Activated CD4-positive, alpha-beta T cell treated with anti-CD3 and anti-CD28 coated beads, Interleukin-2, amount 10 ng/mL, durations not matched to agents 24 days and 14 days (primary cell): ENCODE measurements at regions of chr18 and their contacts with region 1.

Region 1: GRCh38 chr18:10560450-10561045 is 34.7 kb downstream of the NAPG start:
- DNase-seq: peak; percentile 89
- H3K4me3 Mint-ChIP-seq: peak overlapping the region; percentile 3
- H3K27ac Mint-ChIP-seq: no peak overlapping the region
- H3K4me1 Mint-ChIP-seq: peaks cover 11% of the 10 kb centered on the region
- H3K27me3 Mint-ChIP-seq: no peaks in the 10 kb centered on the region

Region 2: GRCh38 chr18:11553098-11553940 is 992.8 kb after region 1 on chr18:
- intact Hi-C with region 1: loop called (anchors 5 kb)
- DNase-seq: peak; percentile 80
- H3K4me3 Mint-ChIP-seq: no peak overlapping the region
- H3K27ac Mint-ChIP-seq: no peak overlapping the region
- H3K4me1 Mint-ChIP-seq: no peaks in the 10 kb centered on the region
- H3K27me3 Mint-ChIP-seq: peaks cover 2% of the 10 kb centered on the region